ENCODE measurements at regions of chr4 and their contacts with region 1.

Region 1: GRCh38 chr4:15238720-15239119 is 189.1 kb upstream of the C1QTNF7 start:
- DNase-seq: no peak
- ATAC-seq: peak; percentile 68

Region 2: DNA sequence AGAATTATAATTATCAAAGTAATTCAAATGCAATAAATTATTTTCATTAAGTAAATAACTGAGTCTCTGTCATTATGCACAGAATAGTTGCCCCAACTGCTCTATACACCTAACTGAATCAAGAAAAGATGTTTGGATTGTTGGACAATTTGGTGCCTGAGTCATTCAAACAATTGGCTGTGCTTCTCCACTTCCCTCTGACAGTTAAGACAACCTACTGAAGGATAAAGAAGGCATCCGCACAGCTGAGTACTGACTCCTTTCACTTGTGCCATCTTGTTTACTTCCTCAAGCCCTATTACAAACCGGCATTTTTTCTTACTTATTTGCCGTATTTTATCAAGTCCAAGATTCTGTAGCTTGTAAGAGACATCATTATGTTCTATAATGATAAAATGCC is 78.5 kb after region 1 on chr4:
- intact Hi-C with region 1: no loop called
- DNase-seq: no peak
- ATAC-seq: no peak

Region 3: DNA sequence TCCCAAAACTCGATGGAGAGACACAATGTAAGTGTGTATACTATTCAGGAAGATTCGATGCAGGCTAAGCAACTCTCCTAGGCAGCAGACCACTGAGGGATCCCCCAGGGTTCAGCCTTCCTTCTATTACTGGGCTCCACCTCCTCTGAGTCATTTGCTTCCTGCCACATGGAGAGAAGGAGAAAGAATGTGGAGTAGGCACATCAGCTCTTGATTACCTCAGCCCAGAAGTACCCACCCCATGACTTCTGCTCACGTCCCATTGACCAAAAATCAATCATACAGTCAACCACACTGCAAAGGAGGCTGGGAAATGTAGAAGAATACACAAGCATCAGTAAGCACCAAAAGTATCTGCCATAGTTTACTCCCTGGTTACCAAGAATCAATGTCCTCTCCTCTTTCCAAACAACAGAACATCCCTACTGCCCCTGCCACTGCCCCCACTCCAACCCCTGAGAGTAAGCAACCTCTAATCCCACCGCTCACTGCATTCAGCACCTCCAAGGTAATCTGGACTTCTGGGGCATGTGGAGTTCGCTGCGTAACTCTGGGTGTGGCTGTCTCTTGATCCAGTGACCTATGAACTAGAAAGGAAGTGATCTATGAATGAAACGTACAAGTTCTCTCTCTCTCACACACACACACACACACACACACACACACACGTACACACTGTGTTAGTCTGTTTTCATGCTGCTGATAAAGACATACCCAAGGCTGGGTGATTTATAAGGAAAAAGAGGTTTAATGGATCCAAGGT is 97.9 kb after region 1 on chr4:
- intact Hi-C with region 1: no loop called
- DNase-seq: no peak
- ATAC-seq: no peak

Region 4: DNA sequence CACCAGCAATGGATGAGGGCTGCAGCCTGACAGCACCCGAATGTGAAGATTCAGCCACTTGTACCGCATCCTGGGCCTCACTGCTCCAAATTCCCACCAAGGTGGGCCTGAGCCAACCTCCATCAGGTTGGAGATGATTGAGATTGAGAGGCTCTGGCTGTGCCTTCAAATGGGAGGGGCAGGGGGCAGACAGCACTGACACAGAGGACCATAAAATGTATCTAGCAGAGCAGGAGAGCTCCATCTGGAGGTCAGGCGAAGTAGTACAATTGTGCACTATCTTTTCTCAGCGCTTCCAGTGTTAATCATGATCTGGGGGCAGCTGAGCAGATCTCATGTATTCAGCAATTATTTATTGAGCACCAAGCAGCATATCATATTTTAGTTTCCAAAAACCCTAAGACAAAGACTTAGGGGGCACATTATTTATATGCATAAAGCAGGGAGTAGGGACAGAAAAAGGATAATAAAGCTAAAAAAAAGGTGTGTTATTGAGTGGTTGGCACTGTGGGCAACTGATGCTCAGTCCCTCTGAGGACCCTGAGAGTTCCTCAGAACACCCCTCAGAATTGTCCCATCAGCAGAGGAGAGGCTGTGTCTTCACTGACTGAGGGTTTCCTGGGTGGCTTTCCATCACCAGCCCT is 157.6 kb after region 1 on chr4:
- intact Hi-C with region 1: loop called (anchors 2 kb)
- DNase-seq: no peak
- ATAC-seq: peak; percentile 56

Region 5: DNA sequence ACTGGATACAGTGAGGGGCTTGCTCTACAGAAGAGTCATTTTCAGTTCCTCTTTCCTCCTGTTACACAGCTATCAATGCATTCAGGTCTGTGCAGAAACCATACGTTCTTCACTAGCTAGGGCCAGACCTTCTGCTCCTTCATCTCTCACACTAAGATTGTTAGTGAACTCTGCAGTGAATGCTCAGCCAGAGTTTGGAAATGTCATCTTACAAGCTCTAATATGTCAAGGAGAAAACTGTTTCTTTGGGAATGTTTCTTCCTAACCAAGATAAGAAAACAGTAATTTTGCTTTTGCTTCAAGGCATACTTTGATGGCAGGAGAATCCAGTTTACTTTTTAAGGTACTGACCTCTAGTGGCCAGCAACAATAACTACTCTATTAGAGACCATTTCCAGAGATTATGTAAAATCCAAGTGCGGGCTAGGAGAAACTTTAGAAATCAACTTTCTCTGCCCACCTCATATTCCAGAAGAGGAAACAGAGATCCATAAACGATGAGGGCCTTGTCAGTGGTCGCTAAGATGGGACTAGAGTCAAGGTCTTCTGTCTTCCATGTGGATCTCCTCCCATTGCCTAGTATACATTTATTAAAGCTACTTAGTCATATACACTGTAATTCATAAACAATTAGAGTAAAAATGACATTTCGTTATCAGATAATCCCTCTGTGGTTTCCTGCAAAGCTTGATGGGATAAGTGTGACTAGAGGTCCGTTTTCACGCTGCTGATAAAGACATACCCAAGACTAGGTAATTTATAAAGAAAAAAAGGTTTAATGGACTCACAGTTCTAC is 218.9 kb after region 1 on chr4:
- intact Hi-C with region 1: loop called (anchors 2 kb)
- DNase-seq: no peak
- ATAC-seq: peak; percentile 67

Measured in Right ventricle myocardium inferior (tissue), 1 donor.